ENCODE measurements at regions of chr16 and their contacts with region 1.

Region 1: DNA sequence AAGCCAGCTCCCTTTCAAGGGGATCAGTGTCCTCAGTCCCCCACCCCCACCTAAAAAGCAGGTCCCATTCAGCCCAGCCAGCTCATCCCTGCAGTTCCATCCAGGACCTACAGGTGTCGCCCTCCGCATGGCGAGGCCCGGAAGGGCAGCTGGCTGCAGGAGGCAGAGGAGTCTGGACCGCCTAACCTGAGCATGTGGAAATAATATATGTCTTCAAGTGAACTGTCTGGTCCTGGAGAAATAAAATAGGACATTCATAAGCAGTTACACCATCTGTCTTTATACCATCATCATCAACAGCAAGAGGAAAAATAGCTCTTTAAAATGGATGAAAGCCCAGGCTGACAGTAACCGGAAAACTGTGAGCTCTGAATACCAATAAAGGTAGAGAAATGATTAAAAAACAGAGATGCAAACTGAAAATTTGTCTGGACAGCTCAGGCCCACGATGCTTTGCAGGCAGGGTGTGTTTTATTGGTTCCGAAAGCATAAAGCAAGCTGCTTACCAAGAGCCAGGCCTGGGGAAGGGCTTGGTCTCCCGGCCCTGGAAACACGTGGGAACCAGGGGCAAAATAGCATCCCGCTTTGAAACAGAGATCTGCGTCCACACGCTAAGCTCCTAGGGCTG is 215.2 kb downstream of the ZFHX3 start:
- DNase-seq: peak; percentile 80
- ATAC-seq: peak; percentile 85
- H3K4me3 Mint-ChIP-seq: no peak overlapping the region
- H3K27ac Mint-ChIP-seq: no peak overlapping the region
- H3K4me1 Mint-ChIP-seq: peaks cover 32% of the 10 kb centered on the region
- H3K27me3 Mint-ChIP-seq: peaks cover 3% of the 10 kb centered on the region

Region 2: GRCh38 chr16:72380283-72380682 is 452.5 kb before region 1 on chr16:
- CTCF ChIA-PET with region 1: no interaction called
- POLR2A ChIA-PET with region 1: no interaction called
- DNase-seq: no peak
- ATAC-seq: no peak
- H3K4me3 Mint-ChIP-seq: no peak overlapping the region
- H3K27ac Mint-ChIP-seq: no peak overlapping the region
- H3K4me1 Mint-ChIP-seq: no peaks in the 10 kb centered on the region
- H3K27me3 Mint-ChIP-seq: no peaks in the 10 kb centered on the region

Region 3: GRCh38 chr16:72664509-72665225 is 168.1 kb before region 1 on chr16:
- CTCF ChIA-PET with region 1: interaction called, 10 read pairs
- POLR2A ChIA-PET with region 1: no interaction called
- DNase-seq: peak; percentile 97
- ATAC-seq: peak; percentile 99
- H3K4me3 Mint-ChIP-seq: peak overlapping the region; percentile 99
- H3K27ac Mint-ChIP-seq: peak overlapping the region; percentile 100
- H3K4me1 Mint-ChIP-seq: peaks cover 26% of the 10 kb centered on the region
- H3K27me3 Mint-ChIP-seq: no peaks in the 10 kb centered on the region

Region 4: DNA sequence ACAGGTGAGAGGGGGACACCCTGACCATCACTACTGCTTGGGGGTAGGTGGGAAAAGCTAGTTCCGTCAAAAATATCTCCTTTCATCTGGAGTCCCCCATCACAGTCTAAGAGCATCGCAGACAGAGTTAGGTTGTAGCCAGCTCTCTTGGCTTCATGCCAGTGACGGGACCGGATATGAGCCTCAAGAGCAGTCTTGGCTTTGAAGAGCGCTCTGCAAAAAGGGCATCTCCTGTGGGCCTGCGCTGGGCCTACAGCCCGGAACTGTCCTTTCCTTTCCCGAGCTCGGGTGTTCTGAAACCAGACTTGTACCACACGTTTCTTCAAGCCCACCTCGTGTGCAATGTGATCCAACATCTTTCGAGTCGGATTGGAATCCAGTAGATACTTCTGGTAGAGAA is 38.4 kb before region 1 on chr16:
- CTCF ChIA-PET with region 1: interaction called, 13 read pairs
- POLR2A ChIA-PET with region 1: no interaction called
- DNase-seq: no peak
- ATAC-seq: no peak
- H3K4me3 Mint-ChIP-seq: no peak overlapping the region
- H3K27ac Mint-ChIP-seq: no peak overlapping the region
- H3K4me1 Mint-ChIP-seq: no peaks in the 10 kb centered on the region
- H3K27me3 Mint-ChIP-seq: peaks cover 10% of the 10 kb centered on the region

Region 5: DNA sequence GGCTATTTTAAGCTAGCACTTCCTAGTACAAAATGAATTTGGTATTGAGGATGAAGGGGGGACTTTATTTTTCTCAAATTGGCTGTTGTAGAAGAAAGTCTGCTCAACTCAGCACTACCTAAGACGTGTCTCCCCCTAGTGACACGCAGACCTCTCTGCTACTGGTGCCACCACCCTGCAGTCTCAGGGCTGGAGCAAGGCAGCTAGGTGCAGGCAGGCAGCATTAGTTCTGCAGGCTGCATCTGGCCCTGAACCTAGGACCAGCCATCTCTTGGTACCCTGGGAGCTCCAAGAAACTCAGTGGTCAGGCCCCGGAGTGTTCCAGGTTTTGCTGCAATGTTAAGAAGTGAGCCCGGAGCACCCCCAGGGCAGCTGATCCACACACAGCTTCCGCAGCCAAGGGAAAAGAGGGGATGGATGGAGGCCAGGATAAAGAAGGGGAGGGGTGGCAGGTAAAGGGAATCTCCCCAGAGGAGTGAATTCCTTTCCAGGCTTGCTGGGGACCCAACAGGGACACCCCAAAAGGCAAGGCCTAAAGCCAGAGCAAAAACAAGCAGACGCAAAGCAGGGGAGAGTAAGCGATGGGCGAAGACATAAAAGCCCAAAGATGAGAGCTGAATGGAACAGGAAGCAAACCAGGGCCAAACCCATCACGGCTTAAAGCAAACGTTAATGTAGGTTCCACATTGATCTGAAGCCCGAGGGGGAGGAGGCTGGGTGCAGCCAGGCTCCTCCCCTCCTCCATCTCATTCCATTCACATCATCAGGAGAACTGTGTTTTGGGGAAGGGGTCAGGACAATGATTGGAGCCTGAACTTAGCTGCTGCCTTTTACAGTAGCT is 14.7 kb after region 1 on chr16:
- CTCF ChIA-PET with region 1: interaction called, 42 read pairs
- POLR2A ChIA-PET with region 1: no interaction called
- DNase-seq: peak; percentile 67
- ATAC-seq: peak; percentile 82
- H3K4me3 Mint-ChIP-seq: no peak overlapping the region
- H3K27ac Mint-ChIP-seq: no peak overlapping the region
- H3K4me1 Mint-ChIP-seq: peaks cover 55% of the 10 kb centered on the region
- H3K27me3 Mint-ChIP-seq: peaks cover 12% of the 10 kb centered on the region

Region 6: DNA sequence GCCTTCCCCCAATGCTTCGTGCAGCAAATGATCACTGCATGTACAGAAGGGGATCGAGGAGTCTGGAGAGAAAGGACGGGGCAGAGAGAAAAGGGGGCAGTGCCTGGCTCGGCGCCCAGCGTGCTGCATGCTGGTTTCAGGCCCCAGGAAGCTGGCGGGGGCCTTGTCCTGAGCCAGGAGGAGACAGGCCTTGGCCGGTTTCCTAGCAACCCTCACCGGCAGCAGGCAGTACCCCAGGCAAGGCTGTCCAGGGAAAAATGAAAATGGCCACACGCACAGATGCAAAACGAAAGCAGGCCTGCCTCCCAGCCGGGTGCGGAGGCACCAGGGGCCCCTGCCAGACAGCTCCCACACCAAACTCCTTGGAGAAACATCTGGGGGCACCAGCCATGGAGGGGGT is 88.9 kb after region 1 on chr16:
- CTCF ChIA-PET with region 1: interaction called, 10 read pairs
- POLR2A ChIA-PET with region 1: no interaction called
- DNase-seq: peak; percentile 29
- ATAC-seq: no peak
- H3K4me3 Mint-ChIP-seq: peak overlapping the region; percentile 53
- H3K27ac Mint-ChIP-seq: peak overlapping the region; percentile 97
- H3K4me1 Mint-ChIP-seq: peaks cover 43% of the 10 kb centered on the region
- H3K27me3 Mint-ChIP-seq: no peaks in the 10 kb centered on the region